ENCODE measurements at regions of chr1 and their contacts with region 1.

Region 1: DNA sequence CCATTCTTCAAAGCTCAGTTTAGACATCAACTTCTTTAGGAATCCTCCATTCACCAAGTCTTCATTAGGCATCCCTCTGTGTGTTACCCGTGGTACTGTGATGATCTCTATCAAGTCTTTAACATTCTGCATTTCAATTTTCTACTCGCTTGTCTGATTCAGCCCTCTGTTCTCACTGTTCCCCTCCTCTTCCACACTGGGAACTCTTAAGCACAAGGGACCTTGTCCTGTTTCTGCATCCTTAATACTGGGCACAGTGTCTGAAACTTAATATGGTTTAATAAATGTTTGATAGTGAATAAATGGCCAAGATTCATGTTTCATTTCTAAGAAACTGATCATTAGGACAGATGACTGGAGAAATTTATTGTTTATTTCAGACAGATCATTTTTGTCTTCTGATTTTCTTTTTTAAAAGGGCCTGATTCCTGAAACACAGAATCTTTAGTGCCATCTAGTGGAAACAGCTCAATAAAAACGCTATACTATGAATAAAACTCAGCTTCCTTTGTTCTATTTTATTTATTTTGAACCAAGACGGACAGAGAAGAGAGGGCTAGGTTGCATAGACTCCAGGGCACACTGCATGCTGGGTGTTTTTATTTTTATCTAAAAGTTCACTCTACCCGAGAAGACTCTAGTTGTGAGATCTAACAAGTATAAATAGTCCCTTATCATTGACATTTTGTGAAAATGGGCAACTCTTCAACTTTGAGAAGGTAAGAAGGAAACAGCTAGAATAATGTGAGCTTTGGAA is 7.0 kb upstream of the TRIM45 start:
- DNase-seq: no peak
- H3K4me3 ChIP-seq: no peak overlapping the region; the same call in 1 of the 2 replicates
- H3K27ac ChIP-seq: no peak overlapping the region
- H3K27me3 ChIP-seq: peaks cover 10% of the 10 kb centered on the region
- CTCF ChIP-seq: peak; percentile 57

Region 2: GRCh38 chr1:117045644-117046043 is 82.9 kb before region 1 on chr1:
- CTCF ChIA-PET with region 1: no interaction called
- POLR2A ChIA-PET with region 1: no interaction called
- DNase-seq: no peak
- H3K4me3 ChIP-seq: no peak overlapping the region
- H3K27ac ChIP-seq: no peak overlapping the region
- H3K27me3 ChIP-seq: peaks cover 3% of the 10 kb centered on the region
- CTCF ChIP-seq: no peak

Region 3: GRCh38 chr1:117067533-117068370 is 60.7 kb before region 1 on chr1:
- CTCF ChIA-PET with region 1: interaction called, 285 read pairs
- POLR2A ChIA-PET with region 1: interaction called, 3 read pairs
- DNase-seq: peak; percentile 41
- H3K4me3 ChIP-seq: no peak overlapping the region
- H3K27ac ChIP-seq: no peak overlapping the region
- H3K27me3 ChIP-seq: no peaks in the 10 kb centered on the region
- CTCF ChIP-seq: peak; percentile 90

Region 4: GRCh38 chr1:117093870-117094621 is 34.5 kb before region 1 on chr1:
- CTCF ChIA-PET with region 1: interaction called, 51 read pairs
- POLR2A ChIA-PET with region 1: interaction called, 3 read pairs
- DNase-seq: no peak
- H3K4me3 ChIP-seq: no peak overlapping the region
- H3K27ac ChIP-seq: peak overlapping the region; percentile 90
- H3K27me3 ChIP-seq: no peaks in the 10 kb centered on the region
- CTCF ChIP-seq: peak; percentile 29; the same call in 1 of the 2 replicates

Region 5: DNA sequence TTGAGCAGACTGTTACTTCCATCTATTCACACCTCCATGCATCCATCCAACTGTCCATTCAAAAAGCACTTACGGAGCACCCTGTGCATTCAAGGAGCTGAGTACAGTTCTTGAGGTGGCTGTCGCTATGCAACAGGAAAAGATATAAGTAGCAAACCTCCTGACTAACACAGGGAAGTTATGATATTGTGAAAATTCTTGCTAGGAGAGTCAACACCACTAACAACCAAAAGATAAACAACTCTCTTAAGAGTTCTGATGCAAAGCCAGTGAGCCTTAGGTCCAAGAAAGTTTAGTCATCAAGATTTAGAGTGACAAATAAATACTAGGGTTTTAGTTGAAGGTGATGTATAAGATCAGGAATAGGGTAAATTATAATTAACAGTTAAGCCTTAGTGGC is 37.6 kb after region 1 on chr1:
- CTCF ChIA-PET with region 1: interaction called, 31 read pairs
- POLR2A ChIA-PET with region 1: no interaction called
- DNase-seq: peak; percentile 72
- H3K4me3 ChIP-seq: no peak overlapping the region
- H3K27ac ChIP-seq: no peak overlapping the region
- H3K27me3 ChIP-seq: no peaks in the 10 kb centered on the region
- CTCF ChIP-seq: no peak

Region 6: GRCh38 chr1:117251926-117252325 is 123.4 kb after region 1 on chr1:
- CTCF ChIA-PET with region 1: no interaction called
- POLR2A ChIA-PET with region 1: no interaction called
- DNase-seq: no peak
- H3K4me3 ChIP-seq: no peak overlapping the region
- H3K27ac ChIP-seq: no peak overlapping the region
- H3K27me3 ChIP-seq: no peaks in the 10 kb centered on the region
- CTCF ChIP-seq: no peak